Posterior cingulate gyrus (tissue), 11 donors: ENCODE measurements at regions of chr5 and their contacts with region 1.

Region 1: GRCh38 chr5:82793808-82794419 is 283.3 kb downstream of the TMEM167A start:
- DNase-seq: peak in 2 of 10 donors; percentile 4 to 40

Region 2: GRCh38 chr5:82351754-82352145 is 442.2 kb before region 1 on chr5:
- intact Hi-C with region 1: loop called (anchors 10 kb)
- DNase-seq: no peak

Region 3: DNA sequence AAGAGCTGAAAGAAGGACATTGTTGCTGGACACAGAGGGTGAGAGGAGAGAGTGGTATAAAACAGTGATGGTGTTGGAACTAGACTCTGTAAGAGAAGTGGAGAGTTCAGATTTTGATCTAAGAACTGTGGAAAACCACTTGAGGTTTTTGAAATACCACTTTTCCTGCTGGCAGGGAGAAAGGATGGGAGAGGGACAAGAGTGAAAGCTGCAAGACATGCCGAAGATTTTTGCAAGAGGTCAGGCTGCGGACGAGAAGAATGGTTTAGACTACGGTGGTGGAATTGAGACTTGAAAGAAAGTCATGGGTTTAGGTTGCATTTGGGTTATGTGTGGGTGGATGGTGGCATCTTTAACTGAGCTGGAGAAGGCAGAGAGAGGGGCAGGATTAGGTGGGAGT is 313.6 kb before region 1 on chr5:
- intact Hi-C with region 1: no loop called
- DNase-seq: no peak

Region 4: DNA sequence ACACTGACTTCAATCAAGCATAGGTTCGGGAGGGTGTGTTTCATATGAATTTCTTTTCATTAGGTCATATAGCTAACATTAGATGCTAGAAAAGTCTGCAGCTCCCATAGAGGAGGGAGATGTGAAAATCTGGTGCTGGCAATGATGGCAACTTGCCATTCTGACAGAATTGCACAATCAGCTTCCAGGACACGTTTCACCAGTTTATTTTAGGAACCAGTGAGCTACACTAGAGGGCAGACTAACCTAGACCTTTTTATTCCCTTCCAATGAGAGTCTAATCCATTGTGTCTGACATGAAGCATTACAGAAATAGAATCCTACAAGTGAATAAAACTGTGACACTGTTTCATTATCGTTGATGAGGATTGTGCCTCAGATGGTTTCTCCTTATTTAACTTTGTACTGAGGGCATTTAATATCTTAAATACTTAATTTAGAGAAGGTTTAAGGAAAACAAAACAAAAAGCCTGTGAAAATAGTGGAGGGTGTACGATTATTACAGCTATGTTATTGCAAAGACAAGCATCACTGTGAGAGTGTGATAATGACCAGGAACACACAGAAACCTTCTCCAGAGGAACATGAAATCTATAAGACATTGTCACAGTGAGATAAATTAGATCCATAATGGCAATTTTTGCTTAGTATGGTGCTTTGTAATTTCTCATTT is 152.4 kb before region 1 on chr5:
- intact Hi-C with region 1: loop called (anchors 5 kb)
- DNase-seq: peak in 7 of 10 donors; percentile 13 to 86 (median 43)

Region 5: DNA sequence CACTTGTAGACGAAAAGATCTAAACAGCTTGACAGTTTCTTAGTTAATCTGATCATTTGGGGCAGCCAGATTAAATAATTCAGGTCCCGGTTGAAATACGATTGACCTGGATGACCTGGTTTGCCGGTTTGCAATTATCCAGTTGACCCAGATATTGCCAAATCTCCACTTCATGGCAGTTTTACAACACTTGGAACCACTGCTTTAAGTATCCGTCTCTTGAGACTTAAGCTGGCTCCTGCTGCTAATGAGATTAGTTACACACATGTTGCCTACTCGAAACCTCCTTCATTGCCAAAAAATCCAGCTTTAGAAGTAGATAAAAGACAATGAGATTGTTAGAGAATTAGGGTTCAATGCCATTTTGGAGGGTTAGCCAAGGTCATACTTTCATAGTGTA is 1063.0 kb after region 1 on chr5:
- intact Hi-C with region 1: no loop called
- DNase-seq: no peak